Common myeloid progenitor, CD34-positive (primary cell): ENCODE measurements at regions of chr6 and their contacts with region 1.

Region 1: GRCh38 chr6:137910424-137910834 is 43.4 kb downstream of the TNFAIP3 start:
- DNase-seq: peak; percentile 78 to 83 (median 83)
- H3K4me3 ChIP-seq: peak overlapping the region in 1 of 7 experiments; percentile 35
- H3K27ac ChIP-seq: peak overlapping the region in 1 of 2 experiments; percentile 36
- H3K4me1 ChIP-seq: peaks cover 29 to 49% (median 37%) of the 10 kb centered on the region in 4 experiments
- H3K27me3 ChIP-seq: no peaks in the 10 kb centered on the region

Region 2: GRCh38 chr6:137927777-137928218 is 17.4 kb after region 1 on chr6:
- CTCF ChIA-PET with region 1: interaction called, 33 read pairs
- POLR2A ChIA-PET with region 1: no interaction called
- DNase-seq: peak; percentile 82 to 97 (median 96)
- H3K4me3 ChIP-seq: peak overlapping the region in 4 of 7 experiments; percentile 6 to 61 (median 46)
- H3K27ac ChIP-seq: peak overlapping the region; percentile 56 to 70
- H3K4me1 ChIP-seq: peaks cover 21 to 47% (median 43%) of the 10 kb centered on the region in 4 experiments
- H3K27me3 ChIP-seq: no peaks in the 10 kb centered on the region

Region 3: GRCh38 chr6:138129190-138129589 is 218.8 kb after region 1 on chr6:
- CTCF ChIA-PET with region 1: no interaction called
- POLR2A ChIA-PET with region 1: no interaction called
- DNase-seq: no peak
- H3K4me3 ChIP-seq: no peak overlapping the region
- H3K27ac ChIP-seq: no peak overlapping the region
- H3K4me1 ChIP-seq: no peaks in the 10 kb centered on the region
- H3K27me3 ChIP-seq: peaks cover 0 to 5% (median 0%) of the 10 kb centered on the region in 5 experiments

Region 4: DNA sequence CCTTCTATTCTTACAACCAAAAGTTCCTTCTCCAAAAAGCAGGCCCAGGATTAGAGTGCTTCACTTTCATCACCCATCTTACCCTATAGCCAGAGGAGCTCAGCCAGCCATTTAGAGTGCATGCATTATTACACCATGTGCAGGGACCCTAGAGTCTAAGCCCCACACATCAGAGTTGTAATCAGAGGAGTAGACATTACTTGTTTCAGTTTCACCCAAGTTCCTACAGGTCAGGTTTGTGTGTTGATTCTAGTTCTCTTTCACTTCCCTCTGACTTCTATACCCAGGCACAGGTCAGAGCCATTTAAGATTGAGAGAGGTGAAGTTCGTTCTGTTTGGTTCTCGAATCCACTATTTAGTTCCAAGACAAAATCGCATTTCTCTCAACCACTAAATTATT is 235.0 kb after region 1 on chr6:
- CTCF ChIA-PET with region 1: no interaction called
- POLR2A ChIA-PET with region 1: no interaction called
- DNase-seq: no peak
- H3K4me3 ChIP-seq: no peak overlapping the region
- H3K27ac ChIP-seq: no peak overlapping the region
- H3K4me1 ChIP-seq: no peaks in the 10 kb centered on the region
- H3K27me3 ChIP-seq: peaks cover 0 to 2% (median 0%) of the 10 kb centered on the region in 5 experiments